A549 (cell line): ENCODE measurements at regions of chr3 and their contacts with region 1.

Region 1: DNA sequence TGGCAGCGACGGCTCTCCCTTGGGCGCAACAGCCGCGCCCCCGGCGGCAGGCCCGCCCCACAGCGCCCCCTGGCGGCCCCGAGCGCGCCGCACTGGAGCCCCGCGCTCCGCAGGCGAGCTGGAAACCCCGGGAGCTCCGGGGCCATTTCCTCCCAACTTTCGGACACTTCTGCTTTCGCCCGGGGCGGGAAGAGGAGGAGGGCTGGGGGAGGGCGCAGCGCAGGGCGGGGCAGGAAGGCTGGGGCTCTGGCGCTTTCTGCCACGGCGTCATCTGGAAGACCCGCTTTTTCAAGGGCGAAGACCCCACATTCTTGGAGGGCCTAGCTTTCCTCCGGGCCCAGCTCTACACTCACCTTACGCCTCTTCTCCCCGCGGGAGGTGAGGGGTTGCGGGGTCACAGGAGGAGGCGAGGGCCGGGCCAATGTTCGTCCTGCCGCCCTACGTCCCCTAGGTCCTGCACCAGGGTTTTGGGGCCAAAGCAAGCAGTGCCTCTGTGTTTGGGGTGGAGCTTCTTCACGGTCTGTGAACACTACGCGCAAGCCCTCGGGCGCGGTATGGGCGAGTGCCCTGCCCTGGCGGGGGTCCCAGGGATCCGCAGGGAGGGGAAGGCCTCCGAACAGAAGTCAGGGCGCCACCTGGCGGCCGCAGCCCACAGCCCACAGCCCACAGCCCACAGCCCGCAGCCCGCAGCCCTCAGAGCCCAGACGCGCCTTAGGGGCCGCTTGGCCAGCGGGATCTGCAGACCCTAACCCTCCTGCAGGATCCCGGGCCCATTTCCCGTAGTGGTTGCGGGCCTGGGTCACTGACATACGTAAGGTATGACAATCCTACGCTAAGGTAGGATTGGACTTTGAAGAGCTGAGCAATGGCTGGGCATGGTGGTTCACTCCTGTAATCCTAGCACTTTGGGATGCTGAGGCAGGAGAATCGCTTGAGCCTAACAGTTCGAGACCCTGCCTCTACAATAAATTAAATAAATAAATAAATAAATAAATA is 31.1 kb downstream of the FOXL2 start:
- DNase-seq: peak; percentile 79 to 82
- ATAC-seq: peak; percentile 94 to 96
- H3K4me3 ChIP-seq: peak overlapping the region; percentile 76
- H3K27ac ChIP-seq: peak overlapping the region; percentile 95 to 97
- H3K4me1 ChIP-seq: peaks cover 5% of the 10 kb centered on the region; the same call in 1 of the 3 replicates
- CTCF ChIP-seq: peak; percentile 70
- EP300 ChIP-seq: no peak
- POLR2A ChIP-seq: peak; percentile 18; the same call in 1 of the 2 replicates
- RAD21 ChIP-seq: peak; percentile 69 to 77

Region 2: GRCh38 chr3:138314751-138315150 is 601.0 kb before region 1 on chr3:
- CTCF ChIA-PET with region 1: no interaction called
- POLR2A ChIA-PET with region 1: no interaction called
- DNase-seq: no peak
- ATAC-seq: no peak
- H3K4me3 ChIP-seq: no peak overlapping the region
- H3K27ac ChIP-seq: no peak overlapping the region
- H3K4me1 ChIP-seq: no peaks in the 10 kb centered on the region
- CTCF ChIP-seq: no peak
- EP300 ChIP-seq: no peak
- POLR2A ChIP-seq: no peak
- RAD21 ChIP-seq: no peak

Region 3: DNA sequence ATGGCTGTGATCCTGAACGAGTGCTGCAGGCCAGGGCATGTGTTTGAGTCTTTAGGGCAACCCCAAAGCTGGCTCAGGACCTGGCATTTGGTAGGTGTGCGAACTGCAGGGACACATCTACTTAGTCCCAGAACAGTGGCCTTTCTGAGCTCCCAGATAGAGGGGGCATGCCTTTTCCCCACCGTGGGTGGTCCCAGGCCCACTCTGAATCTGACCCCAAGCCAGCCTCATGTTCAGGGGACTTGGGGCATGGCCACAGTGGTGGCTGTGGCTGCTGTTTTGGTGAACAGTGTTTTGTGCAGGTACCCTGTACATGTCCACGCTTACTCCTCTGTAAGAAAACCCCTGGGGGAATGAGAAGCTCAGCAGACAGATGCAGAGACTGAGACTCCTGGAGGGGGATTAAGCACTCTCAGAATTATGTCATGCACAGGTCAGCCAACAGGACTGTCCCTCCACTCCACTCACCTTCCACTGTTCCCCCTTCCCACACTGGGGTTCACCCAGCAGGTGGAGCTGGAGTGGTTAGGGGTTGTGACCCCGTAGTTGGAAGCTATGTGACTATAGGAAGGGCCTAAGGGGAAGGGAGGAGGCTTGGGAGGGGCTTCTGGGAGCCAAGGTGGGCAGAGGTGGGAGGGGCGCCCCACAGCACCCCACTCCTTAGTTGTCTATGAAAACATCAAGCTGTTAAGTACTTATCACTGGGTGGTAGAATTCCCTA is 464.9 kb before region 1 on chr3:
- CTCF ChIA-PET with region 1: interaction called, 12 read pairs
- POLR2A ChIA-PET with region 1: no interaction called
- DNase-seq: no peak
- ATAC-seq: no peak
- H3K4me3 ChIP-seq: no peak overlapping the region
- H3K27ac ChIP-seq: no peak overlapping the region
- H3K4me1 ChIP-seq: no peaks in the 10 kb centered on the region
- CTCF ChIP-seq: no peak
- EP300 ChIP-seq: no peak
- POLR2A ChIP-seq: no peak
- RAD21 ChIP-seq: no peak

Region 4: DNA sequence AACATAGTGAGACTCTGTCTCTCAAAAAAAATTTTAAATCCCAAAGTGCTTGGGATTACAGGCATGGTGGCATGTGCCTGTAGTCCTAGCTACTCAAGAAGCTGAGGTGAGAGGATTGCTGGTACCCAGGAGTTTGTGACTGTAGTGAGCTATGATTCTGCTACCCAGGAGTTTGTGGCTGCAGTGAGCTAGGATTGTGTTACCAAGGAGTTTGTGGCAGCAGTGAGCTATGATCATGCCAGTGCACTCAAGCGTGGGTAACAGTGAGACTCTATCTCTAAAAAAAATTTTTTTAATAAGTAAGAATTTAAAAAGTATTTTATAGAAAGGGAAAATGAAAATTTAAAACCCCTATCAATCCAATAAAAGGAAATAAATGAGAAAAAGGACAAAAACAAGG is 237.7 kb before region 1 on chr3:
- CTCF ChIA-PET with region 1: interaction called, 13 read pairs
- POLR2A ChIA-PET with region 1: no interaction called
- DNase-seq: no peak
- ATAC-seq: no peak
- H3K4me3 ChIP-seq: no peak overlapping the region
- H3K27ac ChIP-seq: no peak overlapping the region
- H3K4me1 ChIP-seq: 0 out of 3 replicates have a peak, but pooled peaks cover 3% of the 10 kb centered on the region
- CTCF ChIP-seq: no peak
- EP300 ChIP-seq: no peak
- POLR2A ChIP-seq: no peak
- RAD21 ChIP-seq: no peak

Region 5: DNA sequence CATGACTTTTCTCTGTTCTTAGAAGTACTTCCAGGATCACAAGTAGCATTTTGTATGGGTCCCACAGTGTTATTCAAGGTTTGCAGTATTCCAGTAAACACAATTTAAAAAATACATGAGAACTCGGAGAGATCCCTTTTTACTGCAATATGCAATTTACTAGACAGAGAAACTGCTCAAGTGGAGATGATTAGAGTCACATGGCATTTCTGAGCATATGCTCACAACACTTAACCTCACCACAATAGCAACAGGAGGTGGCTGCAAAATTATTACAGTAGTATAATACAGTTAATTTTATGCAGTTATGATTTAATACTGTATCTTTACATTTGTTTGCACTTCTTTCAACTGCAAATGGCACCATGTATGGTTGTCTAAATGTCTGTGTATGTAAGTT is 168.6 kb before region 1 on chr3:
- CTCF ChIA-PET with region 1: interaction called, 10 read pairs
- POLR2A ChIA-PET with region 1: no interaction called
- DNase-seq: no peak
- ATAC-seq: no peak
- H3K4me3 ChIP-seq: no peak overlapping the region
- H3K27ac ChIP-seq: no peak overlapping the region
- H3K4me1 ChIP-seq: peaks cover 6% of the 10 kb centered on the region; the same call in 1 of the 3 replicates
- CTCF ChIP-seq: no peak
- EP300 ChIP-seq: no peak
- POLR2A ChIP-seq: no peak
- RAD21 ChIP-seq: no peak

Region 6: GRCh38 chr3:138818185-138818860 is 97.5 kb before region 1 on chr3:
- CTCF ChIA-PET with region 1: interaction called, 13 read pairs
- POLR2A ChIA-PET with region 1: interaction called, 4 read pairs
- DNase-seq: no peak
- ATAC-seq: no peak
- H3K4me3 ChIP-seq: no peak overlapping the region
- H3K27ac ChIP-seq: no peak overlapping the region
- H3K4me1 ChIP-seq: peaks cover 8% of the 10 kb centered on the region; the same call in 2 of the 3 replicates
- CTCF ChIP-seq: no peak
- EP300 ChIP-seq: no peak
- POLR2A ChIP-seq: no peak
- RAD21 ChIP-seq: no peak

Region 7: GRCh38 chr3:138898301-138898700 is 17.5 kb before region 1 on chr3:
- CTCF ChIA-PET with region 1: interaction called, 19 read pairs
- POLR2A ChIA-PET with region 1: no interaction called
- DNase-seq: no peak
- ATAC-seq: no peak
- H3K4me3 ChIP-seq: no peak overlapping the region
- H3K27ac ChIP-seq: no peak overlapping the region
- H3K4me1 ChIP-seq: no peaks in the 10 kb centered on the region
- CTCF ChIP-seq: no peak
- EP300 ChIP-seq: no peak
- POLR2A ChIP-seq: no peak
- RAD21 ChIP-seq: no peak